Activated CD4-positive, alpha-beta memory T cell treated with anti-CD3 and anti-CD28 coated beads for 36 hours (primary cell): ENCODE measurements at regions of chr1 and their contacts with region 1.

Region 1: DNA sequence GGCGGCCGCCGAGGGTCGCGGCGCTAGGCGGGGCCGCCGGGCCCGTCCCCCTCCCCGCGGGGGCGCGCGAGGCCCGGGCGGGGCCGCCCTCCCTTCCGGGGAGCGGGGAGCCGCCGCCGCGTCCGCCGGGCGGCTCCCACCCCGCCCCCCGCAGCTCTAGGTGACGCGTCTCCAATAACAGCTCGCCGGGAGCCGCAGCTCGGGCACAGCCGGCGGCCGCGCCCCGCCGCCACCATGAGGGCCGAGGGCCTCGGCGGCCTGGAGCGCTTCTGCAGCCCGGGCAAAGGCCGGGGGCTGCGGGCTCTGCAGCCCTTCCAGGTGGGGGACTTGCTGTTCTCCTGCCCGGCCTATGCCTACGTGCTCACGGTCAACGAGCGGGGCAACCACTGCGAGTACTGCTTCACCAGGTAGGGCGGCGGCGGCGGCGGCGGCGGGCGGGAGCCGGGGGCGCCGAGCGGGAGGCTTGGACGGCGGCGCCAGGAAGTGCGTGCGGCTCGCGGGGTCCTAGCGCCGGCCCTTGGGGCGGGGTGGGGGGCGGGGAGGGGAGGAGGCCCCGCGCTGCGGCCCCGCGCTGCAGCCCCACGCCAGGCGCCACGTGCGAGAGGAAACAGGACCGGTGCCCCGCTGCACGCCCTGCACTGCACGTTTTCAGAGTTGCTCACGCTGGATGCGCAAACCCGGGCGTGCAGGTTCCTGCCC is at the start of gene SMYD2:
- DNase-seq: peak; percentile 72
- H3K4me3 Mint-ChIP-seq: peak within 1 kb of the TSS; percentile 86
- H3K27ac Mint-ChIP-seq: peak within 1 kb of the TSS; percentile 77
- H3K4me1 Mint-ChIP-seq: peaks cover 35% of the 10 kb centered on the region
- H3K27me3 Mint-ChIP-seq: no peaks in the 10 kb centered on the region
- total RNA-seq, gene SMYD2: 31.1 to 32.8 TPM

Region 2: GRCh38 chr1:214310010-214310409 is 28.8 kb after region 1 on chr1:
- CTCF ChIA-PET with region 1: no interaction called
- POLR2A ChIA-PET with region 1: no interaction called
- intact Hi-C with region 1: loop called (anchors 1 kb)
- DNase-seq: peak; percentile 20
- H3K4me3 Mint-ChIP-seq: no peak overlapping the region
- H3K27ac Mint-ChIP-seq: no peak overlapping the region
- H3K4me1 Mint-ChIP-seq: peaks cover 26% of the 10 kb centered on the region
- H3K27me3 Mint-ChIP-seq: no peaks in the 10 kb centered on the region